SK-N-SH (cell line): ENCODE measurements at regions of chr7 and their contacts with region 1.

Region 1: GRCh38 chr7:66140924-66141323 is 26.3 kb downstream of the CRCP start:
- DNase-seq: peak; percentile 52
- H3K4me3 ChIP-seq: no peak overlapping the region
- H3K27ac ChIP-seq: peak overlapping the region; percentile 55 to 96; a peak in 3 of 4 replicates
- H3K4me1 ChIP-seq: peaks cover 19 to 56% of the 10 kb centered on the region in 2 experiments; a peak in 3 of 4 replicates
- H3K27me3 ChIP-seq: no peaks in the 10 kb centered on the region
- CTCF ChIP-seq: peak; percentile 75
- EP300 ChIP-seq: 0 out of 4 replicates have a peak, but pooled peaks of 1 of the 2 experiments have one; percentile 24
- RAD21 ChIP-seq: peak; percentile 94

Region 2: DNA sequence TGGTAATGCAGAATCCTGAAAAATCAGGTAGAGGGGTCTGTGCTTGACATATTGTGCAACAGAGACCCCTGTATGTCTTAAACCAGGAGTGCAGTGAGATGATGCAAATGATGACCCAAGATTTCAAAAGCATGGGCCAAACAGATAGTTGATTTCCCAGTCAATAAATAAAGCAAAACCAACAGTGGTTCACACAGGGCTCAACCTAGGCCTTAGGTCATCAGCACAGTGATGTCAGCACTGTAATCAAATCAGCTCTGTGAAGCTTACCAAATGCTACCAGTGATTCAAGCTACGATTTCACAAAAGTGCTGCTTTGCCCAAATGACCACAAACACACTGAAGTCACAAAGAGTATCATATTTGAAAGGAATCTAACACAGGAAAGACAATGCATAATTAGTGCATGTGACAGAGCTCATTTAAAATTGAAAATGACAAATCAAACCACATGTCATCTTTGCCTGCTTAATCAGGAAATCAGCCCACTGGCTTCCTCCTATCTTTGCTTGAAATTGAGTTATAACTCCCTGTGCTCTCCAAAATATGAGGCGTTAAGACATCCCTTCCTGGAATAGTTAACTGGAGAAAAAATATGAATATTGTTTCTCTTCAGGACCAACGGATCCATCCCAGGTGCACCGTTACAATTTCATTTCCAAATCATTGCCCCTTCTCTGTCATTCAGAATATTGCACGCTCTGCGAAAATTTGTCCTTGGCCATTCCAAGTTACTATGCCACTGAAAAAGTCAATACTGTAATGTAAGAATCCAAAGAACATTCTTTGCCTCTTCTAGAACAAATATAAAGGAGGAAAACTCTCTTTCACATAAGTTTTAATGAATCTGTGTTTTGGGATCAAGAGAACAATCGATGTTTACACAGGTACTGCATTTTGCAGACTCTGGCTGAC is 107.2 kb before region 1 on chr7:
- CTCF ChIA-PET with region 1: interaction called, 16 read pairs
- POLR2A ChIA-PET with region 1: interaction called, 3 read pairs
- DNase-seq: peak; percentile 60
- H3K4me3 ChIP-seq: no peak overlapping the region
- H3K27ac ChIP-seq: peak overlapping the region; percentile 56 to 96
- H3K4me1 ChIP-seq: peaks cover 4 to 21% of the 10 kb centered on the region in 2 experiments; a peak in 3 of 4 replicates
- H3K27me3 ChIP-seq: no peaks in the 10 kb centered on the region
- CTCF ChIP-seq: no peak
- EP300 ChIP-seq: peak; percentile 25 to 94; a peak in 2 of 4 replicates
- RAD21 ChIP-seq: peak; percentile 24; the same call in 1 of the 2 replicates

Region 3: GRCh38 chr7:66125052-66125708 is 15.7 kb before region 1 on chr7:
- CTCF ChIA-PET with region 1: interaction called, 21 read pairs
- POLR2A ChIA-PET with region 1: interaction called, 14 read pairs
- DNase-seq: peak; percentile 56
- H3K4me3 ChIP-seq: no peak overlapping the region
- H3K27ac ChIP-seq: peak overlapping the region; percentile 72 to 99
- H3K4me1 ChIP-seq: peaks cover 19 to 27% of the 10 kb centered on the region in 2 experiments; a peak in 3 of 4 replicates
- H3K27me3 ChIP-seq: no peaks in the 10 kb centered on the region
- CTCF ChIP-seq: no peak
- EP300 ChIP-seq: peak in 1 of 2 experiments; percentile 93; a peak in 2 of 4 replicates
- RAD21 ChIP-seq: no peak; the same call in 1 of the 2 replicates

Region 4: DNA sequence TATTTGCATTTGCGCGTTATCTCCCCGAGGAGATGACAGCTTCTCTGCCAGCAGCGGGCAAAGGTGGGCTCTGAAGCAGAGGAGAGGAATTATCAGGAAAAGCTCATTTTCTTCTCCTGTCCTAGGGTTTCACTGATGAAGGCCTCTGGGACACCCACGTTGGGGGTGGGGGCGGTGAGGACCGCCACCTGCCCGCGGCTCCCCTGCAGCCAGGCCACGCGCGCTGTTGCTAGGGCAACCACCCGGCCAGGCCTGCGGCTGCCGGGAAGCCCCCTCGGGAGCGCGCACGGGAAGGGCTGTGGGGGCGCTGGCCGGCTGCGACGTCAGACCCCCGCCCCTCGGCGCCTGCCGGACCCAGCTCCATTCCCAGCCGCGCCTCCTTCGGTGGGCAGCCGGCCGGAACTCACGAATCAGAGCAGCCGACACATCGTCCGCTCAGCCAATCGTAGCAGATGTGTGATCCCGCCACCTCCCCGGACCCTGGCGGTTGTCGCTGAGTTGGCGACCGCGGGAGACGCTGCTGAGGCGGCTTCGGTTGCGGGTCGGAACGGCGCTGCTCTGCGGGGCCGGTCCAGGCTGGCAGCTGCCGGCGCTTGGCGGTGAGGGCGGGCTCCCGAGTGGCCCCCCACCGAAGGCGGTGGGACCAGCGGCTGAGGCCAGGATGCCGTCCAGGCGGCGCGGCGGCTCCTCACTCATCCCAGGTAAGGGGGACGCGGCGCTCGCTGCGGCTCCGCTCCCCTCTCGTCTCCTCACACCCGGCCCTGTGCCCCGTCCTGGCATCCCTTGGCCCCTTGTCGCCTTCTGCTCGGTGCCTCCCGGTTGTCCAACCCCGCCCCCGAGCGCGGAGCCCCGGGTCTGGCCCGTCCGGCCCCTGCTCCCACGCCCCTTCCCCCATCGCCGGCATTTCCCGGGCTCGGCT is 64.2 kb after region 1 on chr7 and contains the start of gene TPST1:
- CTCF ChIA-PET with region 1: interaction called, 35 read pairs
- POLR2A ChIA-PET with region 1: interaction called, 6 read pairs
- DNase-seq: peak; percentile 100
- H3K4me3 ChIP-seq: peak within 1 kb of the TSS; percentile 72 to 94
- H3K27ac ChIP-seq: peak within 1 kb of the TSS; percentile 42 to 81; a peak in 3 of 4 replicates
- H3K4me1 ChIP-seq: peaks cover 11 to 18% of the 10 kb centered on the region in 2 experiments; a peak in 3 of 4 replicates
- H3K27me3 ChIP-seq: no peaks in the 10 kb centered on the region
- CTCF ChIP-seq: peak; percentile 61
- EP300 ChIP-seq: no peak; a peak in 2 of 4 replicates
- RAD21 ChIP-seq: peak; percentile 50
- polyA plus RNA-seq, gene TPST1: 36.4 and 46.4 TPM in 2 replicates

Region 5: GRCh38 chr7:66257481-66257880 is 116.6 kb after region 1 on chr7:
- CTCF ChIA-PET with region 1: no interaction called
- POLR2A ChIA-PET with region 1: no interaction called
- DNase-seq: no peak
- H3K4me3 ChIP-seq: no peak overlapping the region
- H3K27ac ChIP-seq: no peak overlapping the region
- H3K4me1 ChIP-seq: peaks cover 0 to 6% of the 10 kb centered on the region in 2 experiments; a peak in 1 of 4 replicates
- H3K27me3 ChIP-seq: no peaks in the 10 kb centered on the region
- CTCF ChIP-seq: no peak
- EP300 ChIP-seq: no peak
- RAD21 ChIP-seq: no peak

Region 6: DNA sequence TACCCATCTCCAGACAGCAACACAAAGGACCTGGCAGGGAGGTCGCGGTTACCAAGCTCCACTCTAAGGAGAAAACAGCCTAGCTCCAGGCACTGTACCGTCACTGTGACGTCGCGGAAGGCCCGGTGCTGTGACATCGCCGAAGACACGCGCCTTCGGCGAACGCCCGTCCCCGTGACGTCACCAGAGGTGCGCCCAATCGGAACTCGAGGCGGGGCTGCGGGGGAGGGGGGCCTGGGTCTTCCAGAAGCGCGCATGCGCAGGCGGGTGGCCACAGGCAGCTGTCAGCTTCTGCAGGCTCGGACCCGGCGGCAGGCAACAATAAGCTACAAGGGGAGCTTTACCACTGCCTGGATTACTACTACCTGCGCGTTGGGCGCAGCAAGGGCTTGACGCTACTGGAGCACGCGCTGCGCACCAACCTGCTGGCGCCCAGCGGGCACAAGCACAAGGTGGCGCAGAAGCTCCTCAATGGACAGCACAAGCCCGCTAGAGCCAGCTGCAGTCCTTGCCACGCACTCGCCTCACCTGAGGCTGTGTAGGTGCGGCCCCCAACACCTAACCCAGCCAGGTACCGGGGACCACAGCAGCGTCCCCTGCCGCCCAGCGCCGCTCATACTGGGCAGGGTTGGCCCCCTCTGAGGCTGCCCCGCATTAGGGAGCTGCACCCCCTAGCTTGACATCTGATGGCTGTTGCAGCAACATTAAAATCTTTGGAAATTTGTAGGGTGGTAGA is 272.6 kb after region 1 on chr7:
- CTCF ChIA-PET with region 1: interaction called, 10 read pairs
- POLR2A ChIA-PET with region 1: no interaction called
- DNase-seq: peak; percentile 100
- H3K4me3 ChIP-seq: peak overlapping the region; percentile 52 to 60
- H3K27ac ChIP-seq: no peak overlapping the region
- H3K4me1 ChIP-seq: peaks cover 4 to 9% of the 10 kb centered on the region in 2 experiments; a peak in 2 of 4 replicates
- H3K27me3 ChIP-seq: no peaks in the 10 kb centered on the region
- CTCF ChIP-seq: peak; percentile 63
- EP300 ChIP-seq: no peak
- RAD21 ChIP-seq: peak; percentile 53